AG04450 (cell line): ENCODE measurements at regions of chrX and their contacts with region 1.

Region 1: DNA sequence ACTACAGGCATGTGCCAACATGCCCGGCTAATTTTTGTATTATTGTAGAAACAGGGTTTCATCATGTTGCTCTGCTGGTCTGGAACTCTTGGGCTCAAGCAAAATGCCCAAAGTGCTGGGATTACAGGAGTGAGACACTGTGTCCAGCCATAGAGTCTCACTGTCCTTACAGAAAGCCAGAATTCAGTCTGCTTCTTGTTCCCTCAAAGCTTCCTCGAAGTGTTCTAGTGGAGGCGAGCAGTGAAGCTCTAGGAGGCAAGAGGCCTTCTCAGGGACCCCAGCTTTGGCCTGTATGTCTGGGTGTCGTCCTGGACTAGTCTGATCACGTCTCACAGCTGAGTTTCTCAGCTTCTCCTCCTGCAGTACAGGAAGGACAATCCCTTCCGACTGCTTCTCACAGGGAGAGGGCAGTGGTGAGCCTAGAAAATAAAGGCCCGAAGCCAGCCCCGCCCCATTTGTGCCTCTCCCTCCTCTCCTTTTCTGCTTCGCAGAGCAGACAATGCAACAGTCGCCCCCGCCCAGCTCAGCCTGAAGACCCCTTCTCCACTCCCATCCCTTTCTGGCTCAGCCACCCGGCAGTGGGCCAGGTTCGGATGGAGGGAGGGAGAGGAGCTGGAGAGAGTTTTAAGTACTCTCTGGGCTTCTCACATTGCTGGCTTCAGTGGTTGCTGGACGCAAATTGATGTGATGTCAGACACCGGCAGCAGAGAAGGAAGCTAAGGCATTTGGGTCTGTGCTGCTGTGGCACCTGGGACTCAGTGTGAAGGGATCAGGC is 11.1 kb upstream of the FAM3A start:
- DNase-seq: no peak
- H3K4me3 ChIP-seq: no peak overlapping the region
- H3K27ac ChIP-seq: peak overlapping the region; percentile 82
- H3K27me3 ChIP-seq: no peaks in the 10 kb centered on the region
- CTCF ChIP-seq: peak; percentile 57

Region 2: DNA sequence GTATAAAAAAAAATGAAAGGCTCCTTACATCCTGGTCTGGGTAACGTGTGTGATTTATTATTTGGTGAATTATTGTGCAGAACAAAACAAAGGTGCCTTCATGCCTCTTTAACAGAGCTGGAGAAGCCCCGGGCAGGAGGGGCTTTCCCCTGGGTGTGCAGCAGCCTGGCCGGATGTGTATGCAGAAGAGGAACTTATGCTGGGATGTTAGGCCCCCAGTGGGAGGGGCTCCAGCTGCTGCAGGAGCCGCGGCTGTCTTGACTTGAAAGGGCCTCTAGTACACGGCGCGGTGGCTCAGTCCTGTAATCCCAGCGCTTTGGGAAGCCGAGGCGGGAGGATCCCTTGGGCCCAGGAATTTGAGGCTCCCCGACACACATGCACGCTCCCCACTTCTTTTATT is 944.2 kb before region 1 on chrX:
- CTCF ChIA-PET with region 1: no interaction called
- POLR2A ChIA-PET with region 1: no interaction called
- DNase-seq: no peak
- H3K4me3 ChIP-seq: no peak overlapping the region
- H3K27ac ChIP-seq: no peak overlapping the region
- H3K27me3 ChIP-seq: no peaks in the 10 kb centered on the region
- CTCF ChIP-seq: no peak

Region 3: GRCh38 chrX:154327038-154327820 is 199.9 kb before region 1 on chrX:
- CTCF ChIA-PET with region 1: no interaction called
- POLR2A ChIA-PET with region 1: no interaction called
- DNase-seq: no peak
- H3K4me3 ChIP-seq: no peak overlapping the region
- H3K27ac ChIP-seq: no peak overlapping the region
- H3K27me3 ChIP-seq: peaks cover 38% of the 10 kb centered on the region
- CTCF ChIP-seq: no peak

Region 4: DNA sequence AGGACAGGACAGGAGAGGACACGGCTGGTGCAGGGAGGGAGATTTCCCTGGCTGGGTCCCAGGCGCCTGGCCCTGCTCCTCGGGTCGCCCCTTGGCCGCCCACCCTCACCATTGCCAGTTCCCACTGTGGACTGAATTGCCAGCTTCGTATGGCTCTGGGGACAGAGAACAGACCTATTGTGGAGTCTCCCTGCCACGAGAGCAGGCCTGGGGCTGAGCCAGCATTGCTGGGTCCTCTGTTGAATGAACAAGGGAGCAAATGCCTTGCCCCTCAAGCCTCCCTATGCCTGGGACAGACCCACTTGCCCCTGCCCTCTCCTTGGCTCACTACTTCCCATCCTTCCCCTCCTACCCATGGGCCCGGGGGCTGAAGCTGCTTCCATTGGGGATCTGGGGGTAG is 64.7 kb before region 1 on chrX:
- CTCF ChIA-PET with region 1: no interaction called
- POLR2A ChIA-PET with region 1: no interaction called
- DNase-seq: no peak
- H3K4me3 ChIP-seq: no peak overlapping the region
- H3K27ac ChIP-seq: no peak overlapping the region
- H3K27me3 ChIP-seq: no peaks in the 10 kb centered on the region
- CTCF ChIP-seq: no peak

Region 5: GRCh38 chrX:154515878-154516655 is 11.0 kb before region 1 on chrX and contains the start of gene FAM3A:
- CTCF ChIA-PET with region 1: interaction called, 12 read pairs
- POLR2A ChIA-PET with region 1: interaction called, 5 read pairs
- DNase-seq: peak; percentile 73
- H3K4me3 ChIP-seq: peak within 1 kb of the TSS; percentile 68
- H3K27ac ChIP-seq: peak within 1 kb of the TSS; percentile 81
- H3K27me3 ChIP-seq: no peaks in the 10 kb centered on the region
- CTCF ChIP-seq: no peak
- polyA plus RNA-seq, gene FAM3A: 15.5 and 19.5 TPM in 2 replicates